Activated B cell treated with CpG ODN at 0.5 μM for 24 hours (primary cell): ENCODE measurements at regions of chr6 and their contacts with region 1.

Region 1: DNA sequence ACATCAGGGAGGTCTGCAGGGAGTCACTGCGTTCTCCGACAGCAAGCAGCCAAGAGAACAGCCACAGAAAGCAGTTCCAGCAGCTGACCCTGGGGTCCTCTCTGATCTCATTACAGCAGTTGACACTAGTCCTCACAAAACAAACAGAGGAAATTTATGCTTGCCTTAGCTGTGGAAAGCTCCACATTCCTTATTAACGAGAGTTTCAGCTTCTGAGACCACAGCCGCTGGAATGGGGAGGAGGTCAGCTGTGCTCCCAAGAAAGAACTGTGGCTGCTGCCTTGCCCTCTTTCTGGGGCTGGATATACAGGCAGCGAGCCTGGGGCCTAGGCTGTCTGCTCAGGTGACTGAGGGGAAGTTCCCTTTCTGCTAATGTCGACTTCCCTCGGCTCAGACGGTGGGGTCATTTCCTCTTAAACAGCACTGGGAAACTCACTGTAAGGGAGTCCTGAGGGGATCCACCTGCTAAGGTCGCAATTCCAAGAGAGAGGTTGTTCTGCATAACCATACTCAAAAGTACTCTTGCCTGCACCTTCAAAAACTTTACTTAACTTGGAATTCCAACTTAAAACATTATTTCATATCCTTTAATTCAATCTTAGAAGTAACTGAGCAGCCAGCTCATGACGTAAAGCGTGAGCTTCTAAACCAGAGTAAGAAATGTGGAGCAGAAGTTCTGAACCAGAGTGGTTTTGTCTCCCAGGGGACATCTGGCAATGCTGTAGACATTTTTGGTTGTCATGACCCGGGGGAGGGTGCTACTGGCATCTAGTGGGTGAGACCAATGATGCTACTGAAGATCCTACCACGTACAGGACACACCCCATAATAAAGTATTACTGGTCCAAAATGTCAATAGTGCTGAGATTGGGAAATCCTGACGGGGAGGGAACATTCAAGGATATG is 80.3 kb downstream of the BACH2 start:
- DNase-seq: peak; percentile 52
- ATAC-seq: peak; percentile 80
- H3K4me3 Mint-ChIP-seq: peak overlapping the region; percentile 73
- H3K27ac Mint-ChIP-seq: no peak overlapping the region
- H3K4me1 Mint-ChIP-seq: peaks cover under 1% of the 10 kb centered on the region
- H3K27me3 Mint-ChIP-seq: no peaks in the 10 kb centered on the region
- CTCF ChIP-seq: no peak

Region 2: DNA sequence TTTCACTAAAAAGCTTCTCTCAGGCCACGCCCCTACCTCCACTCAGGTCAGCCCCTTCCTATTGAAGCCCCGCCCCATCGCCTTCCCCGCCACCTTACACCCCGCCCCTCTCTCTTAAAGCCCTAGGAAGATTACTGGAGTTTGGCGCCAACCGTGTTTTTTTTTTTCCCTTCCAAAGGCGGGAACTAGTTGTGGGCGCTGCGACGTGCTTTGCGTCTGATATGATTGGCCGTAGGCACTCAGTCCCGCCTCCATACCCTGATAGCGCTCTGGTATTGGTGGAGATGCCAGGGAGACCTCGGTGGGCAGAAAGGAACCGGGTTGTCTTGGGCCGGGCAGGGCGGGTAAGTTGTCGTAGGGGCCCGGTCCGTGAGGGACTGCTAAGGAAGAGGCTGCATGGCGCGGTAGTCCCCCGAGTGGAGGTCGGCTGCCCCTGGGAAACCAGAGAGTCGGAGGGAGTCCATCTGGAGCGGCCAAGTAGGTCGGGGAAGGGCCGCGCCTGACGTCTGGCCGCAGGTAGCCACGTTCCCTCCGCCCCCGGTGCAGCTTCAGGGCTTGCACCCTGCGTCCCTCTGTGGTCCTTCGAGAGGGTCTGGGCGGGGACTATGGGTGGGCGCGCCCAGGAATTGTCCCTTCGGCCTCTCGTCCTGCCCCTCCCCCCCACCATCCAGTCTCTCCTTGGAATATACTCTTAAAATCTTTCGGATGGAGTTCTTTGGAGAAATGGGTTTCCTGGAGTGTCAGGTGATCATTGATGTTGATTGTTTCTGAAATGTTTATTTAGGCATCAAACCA is 386.5 kb before region 1 on chr6 and contains the start of gene CASP8AP2:
- CTCF ChIA-PET with region 1: no interaction called
- POLR2A ChIA-PET with region 1: interaction called, 5 read pairs
- intact Hi-C with region 1: loop called (anchors 2 kb)
- DNase-seq: peak; percentile 76
- ATAC-seq: peak; percentile 93
- H3K4me3 Mint-ChIP-seq: peak within 1 kb of the TSS; percentile 99
- H3K27ac Mint-ChIP-seq: peak within 1 kb of the TSS; percentile 96
- H3K4me1 Mint-ChIP-seq: peaks cover 37% of the 10 kb centered on the region
- H3K27me3 Mint-ChIP-seq: no peaks in the 10 kb centered on the region
- CTCF ChIP-seq: no peak
- total RNA-seq, gene CASP8AP2: 17.1 and 17.8 TPM in 2 replicates

Region 3: DNA sequence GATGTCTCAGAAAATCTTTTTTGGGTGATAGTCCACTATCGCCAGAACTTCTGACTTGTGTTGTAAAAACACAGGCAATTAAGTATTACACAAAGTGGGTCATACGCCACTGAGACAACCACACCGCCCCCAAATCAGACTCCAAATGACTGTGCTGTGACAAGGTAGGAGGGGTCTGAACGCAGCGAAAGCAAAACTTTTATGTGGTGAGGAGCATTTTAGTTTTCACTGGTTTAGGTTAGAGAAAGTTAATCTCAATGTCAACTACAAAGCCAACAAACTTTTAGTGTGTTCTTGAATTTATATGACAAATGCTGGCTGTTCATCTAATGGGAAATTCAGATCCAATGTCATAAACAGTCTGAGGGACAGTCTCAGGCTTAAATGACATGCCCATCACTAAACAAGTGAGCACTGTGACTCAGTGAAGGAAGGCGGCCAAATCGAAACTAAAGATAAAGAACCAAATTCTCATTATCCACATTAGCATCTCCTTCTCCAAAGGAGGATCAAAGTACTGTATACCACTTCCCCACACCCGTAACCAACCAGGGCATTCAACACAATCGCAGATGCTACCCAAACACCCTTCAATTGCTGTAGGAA is 135.3 kb before region 1 on chr6:
- CTCF ChIA-PET with region 1: interaction called, 27 read pairs
- POLR2A ChIA-PET with region 1: interaction called, 26 read pairs
- intact Hi-C with region 1: loop called (anchors 1 kb)
- DNase-seq: no peak
- ATAC-seq: peak; percentile 61
- H3K4me3 Mint-ChIP-seq: peak overlapping the region; percentile 84
- H3K27ac Mint-ChIP-seq: peak overlapping the region; percentile 86
- H3K4me1 Mint-ChIP-seq: peaks cover 96% of the 10 kb centered on the region
- H3K27me3 Mint-ChIP-seq: no peaks in the 10 kb centered on the region
- CTCF ChIP-seq: no peak

Region 4: GRCh38 chr6:90179190-90180169 is 36.8 kb before region 1 on chr6:
- CTCF ChIA-PET with region 1: interaction called, 38 read pairs
- POLR2A ChIA-PET with region 1: interaction called, 18 read pairs
- intact Hi-C with region 1: loop called (anchors 1 kb)
- DNase-seq: no peak
- ATAC-seq: no peak
- H3K4me3 Mint-ChIP-seq: peak overlapping the region; percentile 77
- H3K27ac Mint-ChIP-seq: peak overlapping the region; percentile 92
- H3K4me1 Mint-ChIP-seq: peaks cover 79% of the 10 kb centered on the region
- H3K27me3 Mint-ChIP-seq: no peaks in the 10 kb centered on the region
- CTCF ChIP-seq: no peak

Region 5: DNA sequence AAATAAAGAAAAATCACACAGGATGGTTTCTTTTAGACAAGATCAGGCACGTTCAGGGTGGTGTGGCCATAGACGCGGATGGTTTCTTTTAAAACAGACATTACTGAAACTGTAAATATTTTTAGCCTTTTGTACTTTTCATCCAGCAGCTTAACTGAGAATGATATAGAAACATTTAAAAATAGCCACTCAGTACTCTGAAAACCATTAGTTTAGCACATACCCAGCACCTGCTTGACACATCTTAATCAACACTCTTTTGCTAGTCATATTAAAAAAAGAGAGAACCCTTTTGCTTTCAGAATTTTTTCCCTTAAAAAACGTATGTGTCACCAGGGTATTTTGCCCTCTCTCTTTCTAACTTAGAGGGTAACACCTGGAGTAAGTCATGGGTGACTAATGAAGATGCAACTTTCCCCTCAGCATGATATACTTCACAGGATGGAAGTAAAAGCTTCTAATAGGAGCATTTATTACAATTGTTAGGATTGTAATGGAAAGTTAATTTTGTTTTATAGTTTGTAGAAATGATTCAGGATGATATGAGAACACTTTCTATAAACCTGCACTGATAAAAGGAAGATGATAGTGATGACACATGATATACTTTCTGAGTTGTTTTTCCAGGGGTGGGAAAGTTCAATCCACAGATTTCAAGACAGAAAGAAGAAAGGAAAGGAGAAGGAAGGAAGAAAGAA is 35.1 kb after region 1 on chr6:
- CTCF ChIA-PET with region 1: no interaction called
- POLR2A ChIA-PET with region 1: interaction called, 11 read pairs
- intact Hi-C with region 1: no loop called
- DNase-seq: no peak
- ATAC-seq: peak; percentile 51
- H3K4me3 Mint-ChIP-seq: peak overlapping the region; percentile 9
- H3K27ac Mint-ChIP-seq: peak overlapping the region; percentile 73
- H3K4me1 Mint-ChIP-seq: peaks cover 73% of the 10 kb centered on the region
- H3K27me3 Mint-ChIP-seq: no peaks in the 10 kb centered on the region
- CTCF ChIP-seq: no peak

Region 6: GRCh38 chr6:90375681-90376439 is 159.5 kb after region 1 on chr6:
- CTCF ChIA-PET with region 1: no interaction called
- POLR2A ChIA-PET with region 1: no interaction called
- intact Hi-C with region 1: loop called (anchors 2 kb)
- DNase-seq: peak; percentile 43
- ATAC-seq: peak; percentile 95
- H3K4me3 Mint-ChIP-seq: peak overlapping the region; percentile 50
- H3K27ac Mint-ChIP-seq: peak overlapping the region; percentile 94
- H3K4me1 Mint-ChIP-seq: peaks cover 72% of the 10 kb centered on the region
- H3K27me3 Mint-ChIP-seq: no peaks in the 10 kb centered on the region
- CTCF ChIP-seq: no peak